ENCODE measurements at regions of chr16 and their contacts with region 1.

Region 1: DNA sequence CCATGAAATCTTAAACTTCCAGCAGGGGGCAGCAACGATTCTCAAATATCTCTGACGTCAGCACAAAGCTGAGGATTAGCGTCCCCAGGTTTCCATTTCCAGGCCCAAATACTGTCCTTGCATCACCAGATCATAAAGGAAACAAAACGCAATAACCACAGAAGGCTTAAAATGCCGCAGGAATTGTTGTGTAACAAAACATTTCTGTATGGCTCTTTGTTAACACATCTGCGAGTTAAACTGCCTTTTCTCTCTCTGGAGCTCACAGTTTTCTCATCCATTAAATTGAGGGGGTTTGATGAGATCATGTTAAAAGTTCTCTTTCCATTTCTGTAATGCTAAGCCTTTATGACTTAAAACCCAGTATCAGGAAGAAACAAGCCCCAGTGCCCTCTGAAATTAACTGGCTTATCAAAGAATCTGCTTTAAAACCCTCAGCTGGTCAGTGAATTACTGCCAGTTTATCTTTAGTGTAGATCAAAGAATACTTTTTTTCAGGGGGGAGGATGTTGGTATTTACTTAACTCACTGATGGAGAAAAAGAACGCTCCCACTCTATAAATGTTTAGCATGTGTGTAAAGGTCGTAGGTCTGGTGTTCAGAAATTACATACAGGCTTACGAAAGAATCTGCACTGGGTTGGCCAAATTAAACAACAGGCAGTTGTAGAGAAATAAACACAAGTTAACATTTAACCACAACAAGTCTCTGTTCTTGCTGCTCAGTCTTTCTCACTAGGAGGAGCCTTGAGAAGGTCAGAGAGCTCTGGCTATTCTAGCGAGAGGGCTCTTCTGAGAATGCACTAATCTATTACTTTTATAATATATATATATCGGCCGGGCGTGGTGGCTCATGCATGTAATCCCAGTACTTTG is 10.6 kb upstream of the TERF2 start:
- DNase-seq: peak; percentile 91 to 92
- H3K4me3 ChIP-seq: no peak overlapping the region
- H3K4me3 Mint-ChIP-seq: peak overlapping the region; percentile 52
- H3K27ac Mint-ChIP-seq: peak overlapping the region; percentile 78
- H3K4me1 ChIP-seq: peaks cover 53% of the 10 kb centered on the region
- H3K4me1 Mint-ChIP-seq: peaks cover 38% of the 10 kb centered on the region
- H3K27me3 ChIP-seq: no peaks in the 10 kb centered on the region
- H3K27me3 Mint-ChIP-seq: no peaks in the 10 kb centered on the region
- CTCF ChIP-seq: peak; percentile 51 to 68

Region 2: GRCh38 chr16:69417520-69418199 is 21.2 kb after region 1 on chr16:
- CTCF ChIA-PET with region 1: interaction called, 4 read pairs
- POLR2A ChIA-PET with region 1: interaction called, 8 read pairs
- intact Hi-C with region 1: loop called (anchors 1 kb)
- DNase-seq: peak in 1 of 2 experiments; percentile 57
- H3K4me3 ChIP-seq: no peak overlapping the region
- H3K4me3 Mint-ChIP-seq: no peak overlapping the region
- H3K27ac Mint-ChIP-seq: peak overlapping the region; percentile 24
- H3K4me1 ChIP-seq: peaks cover 52% of the 10 kb centered on the region
- H3K4me1 Mint-ChIP-seq: peaks cover 7% of the 10 kb centered on the region
- H3K27me3 ChIP-seq: no peaks in the 10 kb centered on the region
- H3K27me3 Mint-ChIP-seq: no peaks in the 10 kb centered on the region
- CTCF ChIP-seq: no peak

Region 3: GRCh38 chr16:69465083-69465721 is 68.8 kb after region 1 on chr16:
- CTCF ChIA-PET with region 1: interaction called, 15 read pairs
- POLR2A ChIA-PET with region 1: interaction called, 4 read pairs
- intact Hi-C with region 1: loop called (anchors 1 kb)
- DNase-seq: peak; percentile 60 to 71
- H3K4me3 ChIP-seq: no peak overlapping the region
- H3K4me3 Mint-ChIP-seq: peak overlapping the region; percentile 57
- H3K27ac Mint-ChIP-seq: peak overlapping the region; percentile 76
- H3K4me1 ChIP-seq: peaks cover 50% of the 10 kb centered on the region
- H3K4me1 Mint-ChIP-seq: peaks cover 51% of the 10 kb centered on the region
- H3K27me3 ChIP-seq: no peaks in the 10 kb centered on the region
- H3K27me3 Mint-ChIP-seq: no peaks in the 10 kb centered on the region
- CTCF ChIP-seq: peak in 1 of 2 experiments; percentile 31

Region 4: DNA sequence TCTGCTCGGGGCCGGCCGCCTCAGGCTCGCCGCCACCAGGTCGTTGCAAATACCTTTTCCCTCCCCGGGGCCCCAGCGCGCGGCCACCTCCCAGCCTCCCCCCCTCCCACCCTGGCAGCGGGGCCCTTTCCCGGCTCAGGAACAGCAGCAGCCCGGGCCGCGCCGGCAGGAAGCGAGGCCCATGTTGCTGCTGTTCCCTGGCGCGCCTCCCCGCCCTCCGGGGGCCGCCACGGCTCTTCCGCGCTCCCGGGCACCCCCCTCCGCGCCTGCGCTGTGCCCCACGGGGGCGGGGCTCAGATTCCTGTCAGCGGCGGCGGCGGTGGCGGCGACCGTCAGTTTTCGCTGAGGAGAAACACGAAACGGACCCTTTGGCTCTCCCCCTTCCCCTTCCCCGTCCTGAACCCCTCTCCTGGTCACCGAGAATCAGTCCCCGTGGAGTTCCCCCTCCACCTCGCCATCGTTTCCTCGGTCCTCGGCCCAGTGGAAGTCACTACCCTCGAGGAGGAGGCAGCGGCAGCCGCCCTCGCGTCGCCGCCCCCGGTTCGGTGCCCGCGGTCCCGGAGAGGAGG is 169.3 kb after region 1 on chr16 and contains the start of gene NFAT5:
- CTCF ChIA-PET with region 1: interaction called, 6 read pairs
- POLR2A ChIA-PET with region 1: no interaction called
- intact Hi-C with region 1: loop called (anchors 1 kb)
- DNase-seq: peak; percentile 96 to 98
- H3K4me3 ChIP-seq: peak within 1 kb of the TSS; percentile 89
- H3K4me3 Mint-ChIP-seq: peak within 1 kb of the TSS; percentile 98
- H3K27ac Mint-ChIP-seq: peak within 1 kb of the TSS; percentile 96
- H3K4me1 ChIP-seq: peaks cover 38% of the 10 kb centered on the region
- H3K4me1 Mint-ChIP-seq: peaks cover 24% of the 10 kb centered on the region
- H3K27me3 ChIP-seq: no peaks in the 10 kb centered on the region
- H3K27me3 Mint-ChIP-seq: no peaks in the 10 kb centered on the region
- CTCF ChIP-seq: peak in 1 of 2 experiments; percentile 43
- total RNA-seq, gene NFAT5: 87.6 and 89.8 TPM in 2 replicates

Region 5: DNA sequence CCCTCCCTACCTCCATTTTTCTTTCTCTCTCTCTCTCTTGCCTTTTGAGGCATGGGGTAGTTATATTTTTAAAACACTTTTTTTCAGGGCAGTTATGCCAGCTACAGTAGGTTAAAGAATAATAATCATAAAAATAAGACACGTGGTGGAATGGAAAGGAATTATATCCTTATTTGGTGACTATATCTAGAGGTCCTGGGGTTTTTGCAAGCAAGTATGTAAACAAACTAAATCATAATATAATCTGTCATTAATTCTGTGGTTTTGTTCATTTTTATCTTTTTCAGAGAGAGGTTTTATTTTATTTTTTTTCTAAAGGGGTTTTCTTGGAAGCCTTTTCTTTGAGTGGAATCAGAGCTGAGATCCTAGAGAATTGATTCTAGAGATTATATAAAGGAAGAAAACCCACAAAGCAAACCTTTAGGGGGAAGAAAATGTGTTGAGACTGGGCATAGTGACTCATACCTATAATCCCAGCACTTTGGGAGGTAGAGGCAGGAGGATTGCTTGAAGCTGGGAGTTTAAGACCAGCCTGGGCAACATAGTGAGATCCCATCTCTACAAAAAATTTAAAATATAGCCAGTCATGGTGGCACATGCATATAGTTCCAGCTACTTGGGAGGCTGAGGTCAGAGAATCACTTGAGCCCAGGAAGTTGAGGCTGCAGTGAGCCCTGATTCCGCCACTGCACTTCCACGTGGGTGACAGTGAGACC is 276.7 kb after region 1 on chr16:
- CTCF ChIA-PET with region 1: interaction called, 4 read pairs
- POLR2A ChIA-PET with region 1: no interaction called
- intact Hi-C with region 1: loop called (anchors 1 kb)
- DNase-seq: no peak
- H3K4me3 ChIP-seq: no peak overlapping the region
- H3K4me3 Mint-ChIP-seq: no peak overlapping the region
- H3K27ac Mint-ChIP-seq: peak overlapping the region; percentile 10
- H3K4me1 ChIP-seq: peaks cover 47% of the 10 kb centered on the region
- H3K4me1 Mint-ChIP-seq: peaks cover 10% of the 10 kb centered on the region
- H3K27me3 ChIP-seq: no peaks in the 10 kb centered on the region
- H3K27me3 Mint-ChIP-seq: no peaks in the 10 kb centered on the region
- CTCF ChIP-seq: no peak

Region 6: GRCh38 chr16:69754469-69755310 is 358.3 kb after region 1 on chr16 and contains the start of gene NOB1:
- CTCF ChIA-PET with region 1: interaction called, 15 read pairs
- POLR2A ChIA-PET with region 1: interaction called, 4 read pairs
- intact Hi-C with region 1: loop called (anchors 1 kb)
- DNase-seq: peak; percentile 98 to 99
- H3K4me3 ChIP-seq: peak within 1 kb of the TSS; percentile 74
- H3K4me3 Mint-ChIP-seq: peak within 1 kb of the TSS; percentile 96
- H3K27ac Mint-ChIP-seq: peak within 1 kb of the TSS; percentile 99
- H3K4me1 ChIP-seq: peaks cover 9% of the 10 kb centered on the region
- H3K4me1 Mint-ChIP-seq: peaks cover 9% of the 10 kb centered on the region
- H3K27me3 ChIP-seq: no peaks in the 10 kb centered on the region
- H3K27me3 Mint-ChIP-seq: peaks cover 2% of the 10 kb centered on the region
- CTCF ChIP-seq: peak; percentile 96 to 99
- total RNA-seq, gene NOB1: 115 and 120 TPM in 2 replicates

Measured in Caco-2 (cell line).